ENCODE measurements at regions of chr1 and their contacts with region 1.

Region 1: DNA sequence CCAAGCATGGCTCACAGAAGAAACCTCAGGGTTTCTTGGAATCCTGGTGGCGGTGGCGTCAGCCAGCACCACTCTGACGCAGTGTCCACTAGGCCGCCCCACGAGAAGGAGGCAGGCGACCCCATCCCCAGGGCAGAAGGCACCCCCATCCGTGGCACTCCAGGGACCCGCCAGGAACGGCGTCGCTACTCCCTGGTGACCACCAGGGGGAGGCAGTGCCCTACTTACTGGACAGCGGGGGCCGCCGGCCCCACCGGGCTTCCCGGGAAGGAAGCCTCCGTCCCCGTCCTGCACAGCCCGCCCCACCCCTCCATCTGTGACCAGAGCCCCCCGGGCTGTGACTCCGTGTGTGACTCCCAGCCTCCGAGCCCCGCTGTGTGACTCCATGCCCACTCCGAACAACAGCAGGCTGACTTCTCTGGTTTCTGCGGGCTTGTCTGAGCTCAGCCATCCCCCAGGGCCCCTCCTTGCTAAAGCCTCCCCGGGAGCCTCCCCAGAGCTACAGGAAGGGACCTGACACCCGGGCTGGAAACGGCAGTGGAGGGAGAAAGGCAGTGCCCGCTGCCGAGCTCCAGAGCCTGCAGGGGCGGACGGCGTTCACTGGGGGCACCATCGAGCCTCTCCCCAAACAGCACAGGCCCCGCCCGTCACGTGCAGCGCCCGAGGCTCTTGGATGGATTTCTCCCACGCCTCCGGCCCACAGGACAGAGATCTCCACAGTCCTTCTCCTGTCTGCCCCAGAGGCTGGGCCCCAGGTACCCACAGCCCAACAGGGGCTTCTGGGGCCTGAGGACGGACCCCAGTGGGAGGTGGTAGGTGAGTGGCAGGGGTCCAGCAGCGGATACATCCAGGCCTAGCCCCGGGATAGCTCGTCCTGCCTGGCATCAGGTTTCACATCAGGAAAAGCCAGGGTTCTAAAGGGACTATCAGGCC is 21.1 kb downstream of the KIF17 start:
- DNase-seq: peak; percentile 88 to 94
- ATAC-seq: peak; percentile 87 to 97 (median 91)
- H3K4me3 ChIP-seq: peak overlapping the region; percentile 72
- H3K27ac ChIP-seq: peak overlapping the region; percentile 72
- H3K4me1 ChIP-seq: peaks cover 10% of the 10 kb centered on the region
- H3K27me3 ChIP-seq: no peaks in the 10 kb centered on the region
- CTCF ChIP-seq: peak; percentile 87

Region 2: DNA sequence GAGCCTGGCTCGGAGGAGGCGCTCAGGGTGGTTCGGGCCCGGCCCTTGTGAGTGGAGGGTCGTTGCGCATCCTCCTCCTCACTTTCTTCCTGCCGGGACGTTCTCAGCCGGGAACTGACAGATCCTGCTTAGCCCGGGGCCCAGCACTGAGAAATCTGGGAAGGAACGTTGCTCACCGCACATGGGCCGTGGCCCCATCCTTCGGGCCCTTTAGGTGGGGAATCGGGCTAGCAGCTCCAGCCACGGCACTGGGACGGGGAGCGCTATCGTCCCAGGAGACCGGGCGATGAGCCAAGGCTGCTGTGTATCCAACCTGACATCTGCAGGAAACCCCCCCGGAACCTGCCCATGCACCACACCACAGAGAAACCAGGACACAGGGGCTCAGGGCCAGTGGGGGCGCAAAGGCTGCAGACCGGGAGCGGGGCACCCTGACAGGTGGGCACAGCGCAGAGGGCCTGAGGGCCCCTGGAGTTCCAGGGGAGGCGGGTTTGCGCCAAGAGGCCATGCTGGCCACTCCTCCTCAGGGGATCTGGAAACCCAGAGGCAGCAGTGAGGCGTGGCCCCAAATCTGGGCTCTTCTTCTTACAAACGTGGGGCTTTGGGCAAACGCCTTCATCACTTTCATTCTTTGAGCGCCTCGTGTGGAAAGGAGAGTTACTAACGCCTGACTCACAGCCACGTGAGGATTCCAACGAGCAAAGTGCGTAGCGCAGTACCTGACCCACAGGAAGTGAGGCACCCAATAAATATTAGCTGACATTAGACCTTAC is 36.1 kb after region 1 on chr1 and contains the start of gene SH2D5:
- intact Hi-C with region 1: loop called (anchors 5 kb)
- DNase-seq: peak; percentile 61 to 75
- ATAC-seq: peak; percentile 79 to 85 (median 82)
- H3K4me3 ChIP-seq: peak within 1 kb of the TSS; percentile 73
- H3K27ac ChIP-seq: peak within 1 kb of the TSS; percentile 79
- H3K4me1 ChIP-seq: peaks cover 8% of the 10 kb centered on the region
- H3K27me3 ChIP-seq: peaks cover 0 to 18% (median 1%) of the 10 kb centered on the region in 3 donors
- CTCF ChIP-seq: peak; percentile 29
- total RNA-seq, gene SH2D5: 0.09 to 2.6 (median 1.3) TPM

Region 3: GRCh38 chr1:20786253-20787028 is 89.8 kb after region 1 on chr1:
- intact Hi-C with region 1: loop called in 1 of 2 experiments (anchors 5 kb)
- DNase-seq: peak; percentile 93 to 98
- ATAC-seq: peak; percentile 94 to 96 (median 94)
- H3K4me3 ChIP-seq: peak overlapping the region; percentile 82
- H3K27ac ChIP-seq: peak overlapping the region; percentile 93
- H3K4me1 ChIP-seq: peaks cover 38% of the 10 kb centered on the region
- H3K27me3 ChIP-seq: no peaks in the 10 kb centered on the region
- CTCF ChIP-seq: no peak

Region 4: GRCh38 chr1:20981915-20982314 is 285.3 kb after region 1 on chr1:
- intact Hi-C with region 1: loop called in 1 of 2 experiments (anchors 10 kb)
- DNase-seq: no peak
- ATAC-seq: no peak
- H3K4me3 ChIP-seq: no peak overlapping the region
- H3K27ac ChIP-seq: no peak overlapping the region
- H3K4me1 ChIP-seq: peaks cover 18% of the 10 kb centered on the region
- H3K27me3 ChIP-seq: no peaks in the 10 kb centered on the region
- CTCF ChIP-seq: no peak

Region 5: GRCh38 chr1:21189906-21190500 is 493.3 kb after region 1 on chr1:
- intact Hi-C with region 1: loop called (anchors 2 to 5 kb)
- DNase-seq: no peak
- ATAC-seq: no peak
- H3K4me3 ChIP-seq: no peak overlapping the region
- H3K27ac ChIP-seq: no peak overlapping the region
- H3K4me1 ChIP-seq: peaks cover 16% of the 10 kb centered on the region
- H3K27me3 ChIP-seq: no peaks in the 10 kb centered on the region
- CTCF ChIP-seq: no peak

Region 6: DNA sequence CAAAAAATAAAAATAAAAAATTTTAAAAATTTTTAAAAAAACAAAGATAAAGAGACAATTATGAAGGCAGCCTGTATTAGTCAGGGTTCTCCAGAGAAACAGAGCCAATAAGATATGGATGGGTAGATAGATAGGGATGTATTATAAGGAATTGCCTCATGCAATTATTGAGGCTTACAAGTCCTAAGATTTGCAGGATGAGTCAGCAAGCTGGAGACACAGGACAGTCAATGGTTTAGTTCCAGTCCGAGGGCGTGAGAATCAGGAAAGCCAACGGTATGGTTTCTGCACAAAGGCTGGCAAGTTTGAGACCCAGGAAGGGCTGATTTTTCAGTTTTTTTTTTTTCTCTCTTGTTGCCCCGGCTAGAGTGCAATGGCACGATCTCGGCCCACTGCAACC is 504.1 kb after region 1 on chr1:
- intact Hi-C with region 1: loop called in 1 of 2 experiments (anchors 2 kb)
- DNase-seq: no peak
- ATAC-seq: no peak
- H3K4me3 ChIP-seq: no peak overlapping the region
- H3K27ac ChIP-seq: no peak overlapping the region
- H3K4me1 ChIP-seq: no peaks in the 10 kb centered on the region
- H3K27me3 ChIP-seq: no peaks in the 10 kb centered on the region
- CTCF ChIP-seq: no peak